ENCODE measurements at regions of chr12 and their contacts with region 1.

Region 1: GRCh38 chr12:52364901-52365489 is 2.3 kb downstream of the KRT85 start:
- DNase-seq: no peak
- H3K4me3 ChIP-seq: no peak overlapping the region
- H3K27ac ChIP-seq: no peak overlapping the region
- H3K4me1 ChIP-seq: no peaks in the 10 kb centered on the region
- H3K27me3 ChIP-seq: no peaks in the 10 kb centered on the region
- CTCF ChIP-seq: no peak
- POLR2A ChIP-seq: no peak

Region 2: GRCh38 chr12:52870351-52871290 is 505.6 kb after region 1 on chr12:
- intact Hi-C with region 1: loop called (anchors 5 kb)
- DNase-seq: peak in 6 of 7 donors; percentile 28 to 61 (median 44)
- H3K4me3 ChIP-seq: no peak overlapping the region
- H3K27ac ChIP-seq: no peak overlapping the region
- H3K4me1 ChIP-seq: peaks cover 0 to 10% of the 10 kb centered on the region in 2 donors
- H3K27me3 ChIP-seq: no peaks in the 10 kb centered on the region
- CTCF ChIP-seq: peak; percentile 31 to 59 (median 49)
- POLR2A ChIP-seq: no peak

Measured in adrenal gland (tissue), 19 donors.